ENCODE measurements at regions of chr12 and their contacts with region 1.

Region 1: DNA sequence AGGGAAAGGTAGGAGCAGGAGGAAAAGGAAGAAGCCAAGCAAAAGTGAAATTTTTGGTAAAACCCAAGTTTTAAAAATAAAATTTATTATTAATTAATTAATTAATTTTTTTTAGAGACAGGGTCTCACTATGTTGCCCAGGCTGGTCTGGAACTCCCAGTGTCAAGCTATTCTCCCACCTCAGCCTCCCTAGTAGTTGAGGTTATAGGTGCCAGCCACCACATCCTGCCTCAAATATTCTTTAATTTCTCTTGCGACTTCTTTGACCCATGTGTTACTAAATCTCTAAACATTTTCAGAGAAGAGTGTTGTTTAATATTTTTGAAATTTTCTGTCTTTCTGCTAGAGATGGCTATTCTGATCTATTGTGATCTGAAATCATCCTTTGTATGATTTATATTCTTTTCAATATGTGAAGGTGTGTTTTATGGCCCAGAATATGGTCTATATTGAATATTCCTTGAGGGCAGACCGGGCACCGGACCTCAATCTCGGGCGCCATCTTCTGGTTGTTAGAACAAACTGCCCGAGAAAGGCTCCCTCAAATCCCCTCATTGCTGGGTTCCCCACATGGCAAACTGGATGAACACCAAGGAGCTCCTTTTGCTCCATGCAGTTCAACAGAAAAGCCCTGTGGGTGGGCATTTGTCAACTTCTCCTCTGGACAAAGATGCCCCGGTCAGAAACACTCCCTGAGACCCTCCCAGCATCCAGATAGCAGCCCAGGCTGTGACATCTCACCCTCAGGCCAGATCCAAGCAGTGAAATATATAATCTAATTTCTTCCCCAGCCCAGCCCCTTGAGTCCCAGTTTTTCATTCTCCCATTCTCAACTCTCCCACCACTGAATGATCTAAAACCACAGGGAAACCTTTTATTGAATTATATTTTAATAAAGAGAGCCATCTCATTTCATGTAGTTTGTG is 110.5 kb downstream of the ASCL4 start:
- DNase-seq: no peak
- ATAC-seq: peak; percentile 94
- H3K4me3 ChIP-seq: no peak overlapping the region
- H3K27ac ChIP-seq: no peak overlapping the region
- H3K4me1 ChIP-seq: no peaks in the 10 kb centered on the region
- H3K27me3 ChIP-seq: no peaks in the 10 kb centered on the region
- CTCF ChIP-seq: peak; percentile 73 to 85 (median 74)
- EP300 ChIP-seq: no peak
- POLR2A ChIP-seq: no peak
- RAD21 ChIP-seq: peak; percentile 92

Region 2: DNA sequence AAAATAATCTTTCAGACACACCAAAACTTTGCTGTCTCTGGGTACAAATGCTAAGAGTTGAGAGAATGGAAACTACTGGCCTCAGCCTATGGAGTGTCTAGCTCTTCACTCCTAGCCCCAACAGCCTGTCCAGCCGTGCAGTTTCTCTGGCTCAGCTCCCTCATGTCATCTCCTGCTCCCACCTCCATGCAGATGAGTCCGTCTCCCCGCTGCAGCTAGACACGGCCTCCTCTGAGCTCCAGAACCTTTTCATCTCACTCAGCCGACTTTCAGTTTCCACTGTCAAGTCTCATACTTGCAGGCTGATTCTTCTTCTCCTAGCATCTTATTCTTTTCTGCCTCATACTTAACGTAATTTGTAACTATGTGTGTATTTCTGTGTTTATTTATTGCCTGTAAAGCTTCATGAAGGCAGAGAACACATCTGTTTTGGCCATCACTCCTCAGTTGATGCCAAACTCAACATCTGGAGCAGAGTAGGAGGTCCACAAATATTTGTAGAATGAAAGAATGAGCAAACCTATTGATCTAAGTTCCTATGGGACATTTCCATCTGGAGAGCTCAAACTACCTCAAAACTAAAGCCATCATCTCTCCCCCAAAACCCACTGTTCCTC is 339.2 kb before region 1 on chr12:
- CTCF ChIA-PET with region 1: no interaction called
- POLR2A ChIA-PET with region 1: no interaction called
- RAD21 ChIA-PET with region 1: no interaction called
- SMC1A ChIA-PET with region 1: no interaction called
- in situ Hi-C with region 1: no loop called
- intact Hi-C with region 1: no loop called
- DNase-seq: no peak
- ATAC-seq: no peak
- H3K4me3 ChIP-seq: no peak overlapping the region
- H3K27ac ChIP-seq: no peak overlapping the region
- H3K4me1 ChIP-seq: no peaks in the 10 kb centered on the region
- H3K27me3 ChIP-seq: no peaks in the 10 kb centered on the region
- CTCF ChIP-seq: no peak
- EP300 ChIP-seq: no peak
- POLR2A ChIP-seq: no peak
- RAD21 ChIP-seq: no peak

Region 3: DNA sequence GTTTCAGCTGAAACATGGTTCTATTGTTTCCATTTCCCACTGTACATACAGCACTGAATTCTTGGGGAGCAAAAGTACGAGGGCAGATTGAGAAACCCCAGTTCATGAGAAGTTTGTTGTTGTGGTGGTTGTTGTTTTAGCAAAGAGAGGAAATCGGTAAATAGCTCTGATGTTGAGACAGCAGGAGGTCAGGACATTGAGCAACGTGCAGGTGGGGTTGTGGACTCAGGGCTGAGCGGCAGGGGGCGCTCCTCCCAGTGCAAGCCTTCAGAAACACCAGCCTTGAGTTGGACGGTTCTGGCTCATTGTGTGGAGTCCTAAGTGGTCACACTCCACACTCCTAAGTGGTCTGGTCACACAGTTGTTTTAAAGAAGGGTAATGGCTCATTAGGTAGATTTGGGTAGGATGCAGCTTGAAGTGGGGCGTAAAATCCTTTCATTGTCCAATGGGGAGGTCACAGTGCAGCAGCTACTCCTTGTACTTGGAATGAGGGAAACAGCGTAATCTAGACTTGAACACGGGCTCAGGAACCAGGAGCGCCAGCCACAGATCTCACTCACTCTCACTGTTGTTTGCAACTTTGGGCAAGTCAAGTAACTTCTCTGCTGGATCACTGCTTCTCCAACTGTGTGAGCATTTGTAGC is 213.9 kb before region 1 on chr12:
- CTCF ChIA-PET with region 1: interaction called, 170 read pairs
- POLR2A ChIA-PET with region 1: interaction called, 3 read pairs
- RAD21 ChIA-PET with region 1: interaction called, 58 read pairs
- SMC1A ChIA-PET with region 1: interaction called, 50 read pairs
- in situ Hi-C with region 1: loop called (anchors 5 kb)
- intact Hi-C with region 1: loop called (anchors 1 kb)
- DNase-seq: no peak
- ATAC-seq: peak; percentile 91
- H3K4me3 ChIP-seq: no peak overlapping the region
- H3K27ac ChIP-seq: no peak overlapping the region
- H3K4me1 ChIP-seq: no peaks in the 10 kb centered on the region
- H3K27me3 ChIP-seq: peaks cover 5% of the 10 kb centered on the region in 2 experiments; a peak in 2 of 4 replicates
- CTCF ChIP-seq: peak; percentile 69 to 89 (median 84)
- EP300 ChIP-seq: no peak
- POLR2A ChIP-seq: no peak
- RAD21 ChIP-seq: peak; percentile 10; the same call in 1 of the 2 replicates

Region 4: DNA sequence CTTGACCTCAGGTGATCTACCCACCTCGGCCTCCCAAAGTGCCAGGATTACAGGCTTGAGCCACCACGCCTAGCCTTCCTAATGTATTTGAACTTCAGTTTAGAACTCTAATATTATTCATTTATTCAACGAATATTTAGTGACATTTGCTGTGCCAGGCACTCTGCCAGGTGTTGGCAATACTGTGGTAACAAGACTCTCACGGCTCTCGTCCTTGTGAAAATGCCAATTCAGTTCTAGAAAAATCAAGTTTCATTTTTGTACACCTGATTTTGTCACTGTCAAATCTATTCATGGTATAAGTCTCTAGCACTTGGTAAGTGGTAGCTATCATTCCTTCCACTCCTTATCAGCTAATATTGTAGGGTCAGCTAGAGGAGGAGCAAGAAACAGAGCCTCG is 205.7 kb before region 1 on chr12:
- CTCF ChIA-PET with region 1: interaction called, 170 read pairs
- POLR2A ChIA-PET with region 1: interaction called, 3 read pairs
- RAD21 ChIA-PET with region 1: interaction called, 58 read pairs
- SMC1A ChIA-PET with region 1: interaction called, 50 read pairs
- in situ Hi-C with region 1: loop called (anchors 5 kb)
- intact Hi-C with region 1: loop called (anchors 1 kb)
- DNase-seq: no peak
- ATAC-seq: no peak
- H3K4me3 ChIP-seq: no peak overlapping the region
- H3K27ac ChIP-seq: no peak overlapping the region
- H3K4me1 ChIP-seq: no peaks in the 10 kb centered on the region
- H3K27me3 ChIP-seq: no peaks in the 10 kb centered on the region
- CTCF ChIP-seq: no peak
- EP300 ChIP-seq: no peak
- POLR2A ChIP-seq: no peak
- RAD21 ChIP-seq: no peak

Region 5: DNA sequence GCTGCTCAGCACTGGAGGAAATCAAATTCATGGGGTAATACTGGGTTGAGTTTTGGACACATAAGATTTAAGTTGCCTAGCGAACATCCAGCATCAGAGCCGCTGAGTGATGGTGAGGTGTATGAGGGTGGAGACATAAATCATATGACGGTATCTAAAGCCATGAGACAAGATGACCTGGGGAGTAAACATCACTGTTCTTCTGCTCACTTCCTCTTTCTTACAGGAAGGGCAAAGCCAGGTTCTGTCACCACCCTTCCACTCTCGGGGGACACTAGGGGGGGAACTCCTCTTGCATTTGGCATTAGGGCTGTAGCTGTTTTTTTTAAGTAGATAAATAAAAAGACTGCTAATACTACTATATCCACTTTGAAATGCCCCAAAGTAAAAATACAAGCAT is 148.1 kb before region 1 on chr12:
- CTCF ChIA-PET with region 1: interaction called, 24 read pairs
- POLR2A ChIA-PET with region 1: no interaction called
- RAD21 ChIA-PET with region 1: interaction called, 3 read pairs
- SMC1A ChIA-PET with region 1: interaction called, 5 read pairs
- in situ Hi-C with region 1: no loop called
- intact Hi-C with region 1: no loop called
- DNase-seq: peak; percentile 57
- ATAC-seq: peak; percentile 100
- H3K4me3 ChIP-seq: no peak overlapping the region
- H3K27ac ChIP-seq: no peak overlapping the region
- H3K4me1 ChIP-seq: peaks cover 3% of the 10 kb centered on the region; the same call in 1 of the 2 replicates
- H3K27me3 ChIP-seq: no peaks in the 10 kb centered on the region
- CTCF ChIP-seq: peak; percentile 35 to 45 (median 36); a peak in 5 of 6 replicates
- EP300 ChIP-seq: peak in 1 of 2 experiments; percentile 25; a peak in 1 of 4 replicates
- POLR2A ChIP-seq: no peak
- RAD21 ChIP-seq: peak; percentile 36; the same call in 1 of the 2 replicates

Region 6: GRCh38 chr12:107829271-107829670 is 55.8 kb before region 1 on chr12:
- CTCF ChIA-PET with region 1: no interaction called
- POLR2A ChIA-PET with region 1: no interaction called
- RAD21 ChIA-PET with region 1: no interaction called
- SMC1A ChIA-PET with region 1: no interaction called
- in situ Hi-C with region 1: no loop called
- intact Hi-C with region 1: no loop called
- DNase-seq: peak; percentile 33
- ATAC-seq: peak; percentile 69
- H3K4me3 ChIP-seq: no peak overlapping the region
- H3K27ac ChIP-seq: no peak overlapping the region
- H3K4me1 ChIP-seq: no peaks in the 10 kb centered on the region
- H3K27me3 ChIP-seq: no peaks in the 10 kb centered on the region
- CTCF ChIP-seq: no peak
- EP300 ChIP-seq: no peak
- POLR2A ChIP-seq: no peak
- RAD21 ChIP-seq: no peak

Region 7: DNA sequence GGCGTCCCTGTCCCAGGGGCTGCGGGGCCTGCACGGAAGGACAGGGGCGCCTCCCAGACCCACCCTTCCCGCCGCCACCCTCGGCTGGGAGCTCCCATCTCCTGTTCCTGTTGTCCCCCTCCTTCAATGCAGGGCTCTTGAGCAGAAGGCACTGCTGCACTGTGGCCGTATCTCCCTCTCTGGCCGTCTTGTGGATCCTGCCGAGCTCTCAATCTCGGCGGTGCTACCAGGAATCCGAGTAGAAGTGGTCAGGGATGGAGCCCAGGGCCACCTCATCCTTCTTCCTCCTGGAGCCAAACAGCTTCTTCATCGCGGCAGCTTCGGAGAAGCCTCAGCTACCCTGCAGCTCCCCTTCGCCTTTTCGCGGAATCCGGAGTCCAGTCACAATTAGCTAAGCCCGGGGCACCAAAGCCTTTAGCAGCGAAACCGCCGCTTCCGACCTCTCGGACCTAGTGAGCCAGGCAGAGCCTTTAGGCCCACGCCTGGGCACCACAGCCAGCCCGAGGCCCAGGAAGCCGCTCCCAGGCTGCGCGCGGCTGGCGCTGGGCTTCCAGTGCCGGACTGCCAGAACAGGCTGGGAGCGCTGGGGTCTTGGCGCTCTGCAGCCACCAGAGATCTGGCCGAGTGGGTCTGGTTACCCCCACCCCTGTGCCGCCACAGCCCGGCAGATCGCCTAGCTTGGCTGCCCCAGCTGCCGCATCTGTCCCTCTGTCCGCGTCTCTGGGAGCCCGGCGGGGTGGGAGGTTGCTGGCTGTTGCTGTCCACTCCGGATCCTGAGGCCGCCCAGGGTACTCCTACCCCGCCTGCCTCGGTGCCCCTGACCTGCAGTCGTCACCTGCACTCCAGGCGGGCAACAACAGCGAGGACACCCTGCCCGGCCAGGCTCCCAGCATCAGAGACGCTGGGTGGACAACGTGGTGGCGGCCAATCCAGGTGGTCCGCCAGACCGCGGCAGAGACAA is 41.4 kb before region 1 on chr12:
- CTCF ChIA-PET with region 1: no interaction called
- POLR2A ChIA-PET with region 1: no interaction called
- RAD21 ChIA-PET with region 1: no interaction called
- SMC1A ChIA-PET with region 1: no interaction called
- in situ Hi-C with region 1: no loop called
- intact Hi-C with region 1: no loop called
- DNase-seq: no peak
- ATAC-seq: no peak
- H3K4me3 ChIP-seq: no peak overlapping the region
- H3K27ac ChIP-seq: no peak overlapping the region
- H3K4me1 ChIP-seq: peaks cover 6% of the 10 kb centered on the region
- H3K27me3 ChIP-seq: peaks cover 4 to 8% of the 10 kb centered on the region in 2 experiments
- CTCF ChIP-seq: no peak
- EP300 ChIP-seq: no peak
- POLR2A ChIP-seq: no peak
- RAD21 ChIP-seq: no peak

Region 8: GRCh38 chr12:108029051-108029835 is 144.2 kb after region 1 on chr12:
- CTCF ChIA-PET with region 1: no interaction called
- POLR2A ChIA-PET with region 1: no interaction called
- RAD21 ChIA-PET with region 1: no interaction called
- SMC1A ChIA-PET with region 1: no interaction called
- in situ Hi-C with region 1: no loop called
- intact Hi-C with region 1: no loop called
- DNase-seq: no peak
- ATAC-seq: no peak
- H3K4me3 ChIP-seq: no peak overlapping the region
- H3K27ac ChIP-seq: no peak overlapping the region
- H3K4me1 ChIP-seq: no peaks in the 10 kb centered on the region
- H3K27me3 ChIP-seq: no peaks in the 10 kb centered on the region; a peak in 2 of 4 replicates
- CTCF ChIP-seq: no peak
- EP300 ChIP-seq: no peak
- POLR2A ChIP-seq: no peak
- RAD21 ChIP-seq: no peak